HepG2 (cell line): ENCODE measurements at regions of chr16 and their contacts with region 1.

Region 1: GRCh38 chr16:77816293-77816692 is 27.9 kb downstream of the VAT1L start:
- DNase-seq: no peak
- ATAC-seq: no peak
- H3K4me3 ChIP-seq: no peak overlapping the region
- H3K27ac ChIP-seq: no peak overlapping the region
- H3K4me1 ChIP-seq: peaks cover 5% of the 10 kb centered on the region; the same call in 1 of the 2 replicates
- H3K27me3 ChIP-seq: no peaks in the 10 kb centered on the region; a peak in 1 of 5 replicates
- CTCF ChIP-seq: no peak
- EP300 ChIP-seq: no peak
- POLR2A ChIP-seq: no peak
- RAD21 ChIP-seq: no peak

Region 2: DNA sequence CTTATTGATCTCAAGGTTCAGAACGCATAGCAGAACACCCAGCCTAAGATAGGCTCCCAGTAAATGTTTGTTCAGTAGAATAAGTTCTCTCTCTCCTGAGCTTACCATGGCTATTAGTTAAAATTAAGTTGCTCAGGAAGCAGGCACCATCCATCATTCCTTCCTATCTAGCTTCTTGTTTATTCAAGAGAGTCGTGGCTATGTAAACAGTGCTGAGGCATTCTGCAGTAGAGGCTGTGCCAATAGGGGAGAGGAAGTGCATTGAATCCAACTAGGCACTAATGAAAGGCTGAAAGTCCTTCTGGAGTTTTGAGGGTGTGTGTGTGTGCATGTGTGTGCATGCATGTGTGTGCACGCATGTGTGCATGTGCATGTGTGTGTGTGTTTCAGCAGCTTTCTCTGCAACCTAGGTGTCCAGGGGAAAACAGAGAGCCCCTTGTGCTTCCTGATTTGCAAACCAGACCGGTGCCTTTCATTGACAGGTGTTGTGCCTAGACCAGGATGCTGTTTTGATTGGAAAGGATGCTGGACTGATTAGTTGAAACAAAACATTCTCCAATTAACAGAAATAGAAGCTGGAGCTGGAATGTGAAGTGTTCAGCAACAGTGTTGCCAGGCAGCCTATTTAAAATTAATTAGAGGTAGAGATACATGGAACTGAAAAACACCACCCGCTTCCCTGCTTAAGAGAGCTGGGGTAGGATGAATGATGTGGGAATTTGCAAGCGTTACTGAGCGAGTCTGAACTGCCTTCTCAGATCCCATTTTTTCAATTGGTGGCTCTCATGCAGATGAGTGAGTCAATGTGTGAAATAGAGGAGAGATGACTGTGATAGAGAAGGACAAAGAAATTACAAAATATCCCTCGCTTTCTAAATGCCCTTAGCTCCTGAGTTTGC is 102.8 kb after region 1 on chr16:
- CTCF ChIA-PET with region 1: no interaction called
- POLR2A ChIA-PET with region 1: no interaction called
- in situ Hi-C with region 1: loop called (anchors 25 kb)
- intact Hi-C with region 1: no loop called
- DNase-seq: peak; percentile 24
- ATAC-seq: peak; percentile 57
- H3K4me3 ChIP-seq: no peak overlapping the region
- H3K27ac ChIP-seq: no peak overlapping the region
- H3K4me1 ChIP-seq: 0 out of 2 replicates have a peak, but pooled peaks cover 5% of the 10 kb centered on the region
- H3K27me3 ChIP-seq: peaks cover 0 to 27% of the 10 kb centered on the region in 2 experiments; a peak in 4 of 5 replicates
- CTCF ChIP-seq: no peak
- EP300 ChIP-seq: no peak
- POLR2A ChIP-seq: no peak
- RAD21 ChIP-seq: no peak

Region 3: GRCh38 chr16:78060293-78060692 is 244.0 kb after region 1 on chr16:
- CTCF ChIA-PET with region 1: no interaction called
- POLR2A ChIA-PET with region 1: no interaction called
- in situ Hi-C with region 1: no loop called
- intact Hi-C with region 1: no loop called
- DNase-seq: no peak
- ATAC-seq: no peak
- H3K4me3 ChIP-seq: no peak overlapping the region
- H3K27ac ChIP-seq: no peak overlapping the region
- H3K4me1 ChIP-seq: peaks cover 7% of the 10 kb centered on the region; the same call in 1 of the 2 replicates
- H3K27me3 ChIP-seq: peaks cover 0 to 8% of the 10 kb centered on the region in 2 experiments; a peak in 3 of 5 replicates
- CTCF ChIP-seq: 0 out of 2 replicates have a peak, but pooled peaks have one; percentile 12
- EP300 ChIP-seq: no peak
- POLR2A ChIP-seq: no peak
- RAD21 ChIP-seq: no peak